ENCODE measurements at regions of chr2 and their contacts with region 1.

Region 1: GRCh38 chr2:196239622-196240587 is 68.5 kb upstream of the STK17B start:
- DNase-seq: peak; percentile 94
- H3K4me3 Mint-ChIP-seq: peak overlapping the region; percentile 36
- H3K27ac Mint-ChIP-seq: peak overlapping the region; percentile 87
- H3K4me1 Mint-ChIP-seq: peaks cover 84% of the 10 kb centered on the region
- H3K27me3 Mint-ChIP-seq: no peaks in the 10 kb centered on the region

Region 2: GRCh38 chr2:195559431-195559914 is 680.4 kb before region 1 on chr2:
- CTCF ChIA-PET with region 1: no interaction called
- POLR2A ChIA-PET with region 1: interaction called, 3 read pairs
- intact Hi-C with region 1: loop called (anchors 5 kb)
- DNase-seq: peak; percentile 91
- H3K4me3 Mint-ChIP-seq: peak overlapping the region; percentile 63
- H3K27ac Mint-ChIP-seq: peak overlapping the region; percentile 92
- H3K4me1 Mint-ChIP-seq: peaks cover 61% of the 10 kb centered on the region
- H3K27me3 Mint-ChIP-seq: no peaks in the 10 kb centered on the region

Region 3: GRCh38 chr2:196182439-196183171 is 57.3 kb before region 1 on chr2:
- CTCF ChIA-PET with region 1: no interaction called
- POLR2A ChIA-PET with region 1: interaction called, 5 read pairs
- intact Hi-C with region 1: loop called (anchors 1 kb)
- DNase-seq: no peak
- H3K4me3 Mint-ChIP-seq: peak overlapping the region; percentile 75
- H3K27ac Mint-ChIP-seq: peak overlapping the region; percentile 88
- H3K4me1 Mint-ChIP-seq: peaks cover 77% of the 10 kb centered on the region
- H3K27me3 Mint-ChIP-seq: no peaks in the 10 kb centered on the region

Region 4: GRCh38 chr2:196205881-196206435 is 33.9 kb before region 1 on chr2:
- CTCF ChIA-PET with region 1: interaction called, 4 read pairs
- POLR2A ChIA-PET with region 1: interaction called, 16 read pairs
- intact Hi-C with region 1: loop called (anchors 1 kb)
- DNase-seq: no peak
- H3K4me3 Mint-ChIP-seq: no peak overlapping the region
- H3K27ac Mint-ChIP-seq: peak overlapping the region; percentile 7
- H3K4me1 Mint-ChIP-seq: peaks cover 31% of the 10 kb centered on the region
- H3K27me3 Mint-ChIP-seq: no peaks in the 10 kb centered on the region

Region 5: DNA sequence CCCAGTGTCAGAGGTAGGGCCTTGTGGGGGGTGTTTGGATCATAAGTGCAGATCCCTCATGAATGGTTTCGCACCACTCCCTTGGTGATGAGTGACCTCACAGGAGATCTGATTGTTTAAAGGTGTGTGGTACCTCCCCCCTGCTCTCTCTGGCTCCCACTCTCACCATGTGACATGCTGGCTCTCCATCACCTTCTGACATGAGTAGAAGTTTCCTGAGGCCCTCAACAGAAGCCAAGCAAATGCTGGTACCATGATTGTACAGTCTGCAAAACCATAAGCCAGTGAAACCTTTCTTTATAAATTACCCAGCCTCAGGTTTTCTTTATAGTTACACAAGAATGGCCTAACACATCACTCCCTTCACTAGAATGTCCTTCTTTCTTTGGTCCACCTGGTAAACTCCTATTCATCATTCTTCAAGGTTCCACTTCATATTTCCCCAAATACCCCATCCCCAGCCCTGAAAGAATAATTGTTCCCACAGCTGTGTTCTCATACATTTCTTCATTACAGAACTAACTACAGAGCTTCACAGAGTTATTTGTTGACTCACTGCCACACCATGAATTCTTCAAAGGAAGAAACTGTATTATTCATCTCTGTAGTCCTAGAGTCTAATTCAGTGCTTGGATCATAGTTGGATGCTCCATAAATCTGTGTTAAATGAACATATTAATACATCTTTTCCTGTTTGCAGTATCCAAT is 12.7 kb after region 1 on chr2:
- CTCF ChIA-PET with region 1: interaction called, 4 read pairs
- POLR2A ChIA-PET with region 1: interaction called, 9 read pairs
- intact Hi-C with region 1: loop called (anchors 1 kb)
- DNase-seq: peak; percentile 44
- H3K4me3 Mint-ChIP-seq: no peak overlapping the region
- H3K27ac Mint-ChIP-seq: peak overlapping the region; percentile 87
- H3K4me1 Mint-ChIP-seq: peaks cover 79% of the 10 kb centered on the region
- H3K27me3 Mint-ChIP-seq: no peaks in the 10 kb centered on the region

Region 6: GRCh38 chr2:196277002-196277401 is 37.1 kb after region 1 on chr2:
- CTCF ChIA-PET with region 1: interaction called, 12 read pairs
- POLR2A ChIA-PET with region 1: interaction called, 3 read pairs
- intact Hi-C with region 1: loop called (anchors 1 kb)
- DNase-seq: peak; percentile 42
- H3K4me3 Mint-ChIP-seq: no peak overlapping the region
- H3K27ac Mint-ChIP-seq: peak overlapping the region; percentile 69
- H3K4me1 Mint-ChIP-seq: peaks cover 57% of the 10 kb centered on the region
- H3K27me3 Mint-ChIP-seq: no peaks in the 10 kb centered on the region

Region 7: DNA sequence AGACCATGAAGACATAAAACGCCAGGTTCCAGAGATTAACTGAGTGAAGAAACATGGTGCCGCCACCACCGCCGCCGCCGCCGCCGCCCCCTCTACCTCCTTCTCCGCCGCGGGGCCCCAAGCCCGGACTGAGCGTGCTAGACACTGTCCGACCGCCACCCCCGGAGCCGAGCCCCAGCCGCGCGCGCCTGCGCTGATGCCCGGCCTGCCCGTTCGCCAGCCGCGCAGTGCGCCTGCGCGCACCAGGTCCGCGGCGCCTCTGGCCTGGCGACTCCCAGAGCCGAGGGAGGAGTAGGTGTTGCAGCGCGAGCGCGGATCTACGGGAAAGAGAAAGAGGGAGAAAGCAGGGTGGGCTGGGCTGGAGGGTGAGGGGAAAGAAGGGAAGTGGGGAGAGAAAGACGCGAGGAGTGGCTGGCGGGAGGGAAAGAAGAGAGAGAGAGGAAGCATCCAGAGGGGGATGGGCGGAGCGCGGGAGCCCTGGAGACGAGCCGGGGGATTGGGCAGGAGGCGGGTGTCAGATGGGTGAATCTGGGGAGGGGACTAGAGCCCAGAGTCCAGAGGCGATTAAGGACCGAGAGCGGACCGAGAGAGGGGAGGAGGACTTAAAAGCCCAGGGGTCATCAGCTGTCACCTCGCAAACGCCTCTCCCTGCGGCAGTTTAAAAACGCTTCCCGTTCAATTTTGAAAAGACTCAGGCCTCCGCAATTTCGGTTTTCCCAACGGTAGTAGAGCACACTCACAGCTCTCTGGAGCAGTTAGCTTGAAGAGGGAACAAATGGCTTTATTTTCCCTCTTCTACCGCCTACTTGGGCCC is 686.9 kb after region 1 on chr2 and contains the start of gene PGAP1:
- CTCF ChIA-PET with region 1: no interaction called
- POLR2A ChIA-PET with region 1: no interaction called
- intact Hi-C with region 1: loop called (anchors 2 kb)
- DNase-seq: peak; percentile 93
- H3K4me3 Mint-ChIP-seq: peak within 1 kb of the TSS; percentile 96
- H3K27ac Mint-ChIP-seq: peak within 1 kb of the TSS; percentile 100
- H3K4me1 Mint-ChIP-seq: peaks cover 35% of the 10 kb centered on the region
- H3K27me3 Mint-ChIP-seq: peaks cover 4% of the 10 kb centered on the region
- total RNA-seq, gene PGAP1: 24.5 to 25.5 TPM

Measured in activated CD4-positive, alpha-beta memory T cell treated with anti-CD3 and anti-CD28 coated beads for 36 hours (primary cell).